ENCODE measurements at regions of chr17 and their contacts with region 1.

Region 1: DNA sequence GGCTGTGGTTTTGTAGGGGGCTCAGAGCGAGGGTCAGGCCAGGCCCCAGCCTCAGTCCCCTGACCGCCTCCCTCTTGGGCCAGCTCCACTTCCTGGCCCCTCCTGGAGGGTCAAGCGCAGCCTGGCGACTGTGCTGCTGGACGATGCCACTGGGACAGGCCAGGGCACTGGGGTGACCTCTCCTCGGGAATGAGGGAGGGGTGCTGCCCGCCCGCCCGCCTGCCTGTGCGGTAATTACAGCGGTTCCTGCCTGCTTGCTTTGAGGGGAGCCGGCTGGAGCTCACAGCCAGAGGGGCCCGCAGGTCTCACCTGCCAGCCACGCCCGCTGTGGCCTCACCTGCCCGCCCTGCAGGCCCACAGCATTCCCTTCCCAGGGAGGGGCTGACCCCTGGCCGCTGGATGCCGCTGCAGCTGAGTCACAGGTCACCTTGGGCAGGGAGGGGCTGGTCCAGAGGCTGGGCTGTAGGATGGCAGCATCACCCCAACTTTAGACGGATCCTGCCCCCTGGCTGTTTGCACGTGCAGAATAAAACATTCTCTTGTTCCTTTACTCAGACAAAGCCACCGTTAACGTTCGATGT is 76.7 kb upstream of the CBX4 start:
- DNase-seq: peak in 1 of 5 donors; percentile 15
- H3K4me3 ChIP-seq: no peak overlapping the region
- H3K4me3 Mint-ChIP-seq: no peak overlapping the region
- H3K27ac ChIP-seq: no peak overlapping the region
- H3K27ac Mint-ChIP-seq: no peak overlapping the region
- H3K4me1 ChIP-seq: no peaks in the 10 kb centered on the region
- H3K4me1 Mint-ChIP-seq: peaks cover 0 to 2% (median 0%) of the 10 kb centered on the region in 4 donors
- H3K27me3 ChIP-seq: no peaks in the 10 kb centered on the region
- H3K27me3 Mint-ChIP-seq: peaks cover 10 to 24% of the 10 kb centered on the region in 2 donors

Region 2: GRCh38 chr17:79789534-79790353 is 126.2 kb before region 1 on chr17:
- CTCF ChIA-PET with region 1: interaction called, 4 read pairs
- POLR2A ChIA-PET with region 1: no interaction called
- intact Hi-C with region 1: loop called (anchors 1 kb)
- DNase-seq: no peak
- H3K4me3 ChIP-seq: no peak overlapping the region
- H3K4me3 Mint-ChIP-seq: peak overlapping the region in 2 of 8 donors; percentile 10 to 36
- H3K27ac ChIP-seq: no peak overlapping the region
- H3K27ac Mint-ChIP-seq: peak overlapping the region in 1 of 7 donors; percentile 63
- H3K4me1 ChIP-seq: peaks cover 25% of the 10 kb centered on the region
- H3K4me1 Mint-ChIP-seq: peaks cover 2 to 16% (median 7%) of the 10 kb centered on the region in 4 donors
- H3K27me3 ChIP-seq: peaks cover 23% of the 10 kb centered on the region
- H3K27me3 Mint-ChIP-seq: peaks cover 29 to 41% of the 10 kb centered on the region in 2 donors

Region 3: DNA sequence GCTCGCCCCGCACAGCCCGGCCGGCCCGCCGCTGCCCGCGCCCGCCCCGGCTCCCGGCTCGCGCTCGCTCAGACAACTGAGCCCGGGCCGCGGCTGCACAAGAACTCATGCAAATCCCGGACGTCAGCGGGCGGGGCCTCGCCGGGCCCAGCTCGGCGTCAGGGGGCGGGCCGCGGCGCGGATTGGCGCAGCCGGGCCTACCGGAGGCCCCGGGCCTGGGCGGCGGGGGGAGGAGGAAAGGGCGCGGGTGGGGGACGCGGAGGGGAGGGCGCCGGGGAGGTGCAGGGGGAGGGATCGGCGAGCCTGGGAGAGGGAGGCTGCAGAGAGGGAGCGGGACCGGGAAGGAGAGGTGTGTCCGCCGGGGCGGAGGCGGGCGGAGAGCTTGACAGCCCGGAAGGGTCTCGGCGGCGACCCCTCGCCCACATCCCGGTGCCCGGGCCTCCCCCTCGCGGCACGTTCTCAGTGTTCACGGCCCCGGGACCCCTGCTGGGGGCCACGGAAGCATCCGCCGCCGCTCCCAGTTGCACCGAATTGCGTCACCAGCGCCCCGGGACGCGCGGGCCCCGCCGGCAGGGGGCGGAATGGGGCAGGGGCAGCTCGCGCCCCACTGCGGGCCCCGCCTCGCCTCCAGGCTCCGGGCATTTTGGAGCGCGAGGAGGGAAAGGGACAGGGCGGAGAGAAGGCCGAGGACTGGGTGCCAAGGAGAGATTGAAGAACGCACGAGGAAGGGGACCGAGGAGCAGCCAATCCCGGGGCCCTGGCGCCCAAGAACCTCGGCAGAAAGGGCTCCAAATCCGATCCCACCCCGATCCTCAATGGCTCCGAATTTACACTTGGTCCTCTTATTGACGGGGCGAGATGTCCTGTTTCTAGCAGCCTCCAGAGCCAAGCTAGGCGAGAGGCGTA is 76.3 kb before region 1 on chr17 and contains the start of gene CBX4:
- CTCF ChIA-PET with region 1: no interaction called
- POLR2A ChIA-PET with region 1: no interaction called
- intact Hi-C with region 1: loop called (anchors 10 kb)
- DNase-seq: peak; percentile 85 to 92 (median 87)
- H3K4me3 ChIP-seq: peak within 1 kb of the TSS; percentile 89 to 99
- H3K4me3 Mint-ChIP-seq: peak within 1 kb of the TSS; percentile 91 to 97 (median 96)
- H3K27ac ChIP-seq: peak within 1 kb of the TSS; percentile 52
- H3K27ac Mint-ChIP-seq: peak within 1 kb of the TSS; percentile 89 to 98 (median 95)
- H3K4me1 ChIP-seq: peaks cover 75% of the 10 kb centered on the region
- H3K4me1 Mint-ChIP-seq: peaks cover 12 to 65% (median 40%) of the 10 kb centered on the region in 4 donors
- H3K27me3 ChIP-seq: peaks cover 37% of the 10 kb centered on the region
- H3K27me3 Mint-ChIP-seq: peaks cover 10 to 13% of the 10 kb centered on the region in 2 donors
- total RNA-seq, gene CBX4: 64.7 to 65.7 TPM